ENCODE measurements at regions of chr6 and their contacts with region 1.

Region 1: DNA sequence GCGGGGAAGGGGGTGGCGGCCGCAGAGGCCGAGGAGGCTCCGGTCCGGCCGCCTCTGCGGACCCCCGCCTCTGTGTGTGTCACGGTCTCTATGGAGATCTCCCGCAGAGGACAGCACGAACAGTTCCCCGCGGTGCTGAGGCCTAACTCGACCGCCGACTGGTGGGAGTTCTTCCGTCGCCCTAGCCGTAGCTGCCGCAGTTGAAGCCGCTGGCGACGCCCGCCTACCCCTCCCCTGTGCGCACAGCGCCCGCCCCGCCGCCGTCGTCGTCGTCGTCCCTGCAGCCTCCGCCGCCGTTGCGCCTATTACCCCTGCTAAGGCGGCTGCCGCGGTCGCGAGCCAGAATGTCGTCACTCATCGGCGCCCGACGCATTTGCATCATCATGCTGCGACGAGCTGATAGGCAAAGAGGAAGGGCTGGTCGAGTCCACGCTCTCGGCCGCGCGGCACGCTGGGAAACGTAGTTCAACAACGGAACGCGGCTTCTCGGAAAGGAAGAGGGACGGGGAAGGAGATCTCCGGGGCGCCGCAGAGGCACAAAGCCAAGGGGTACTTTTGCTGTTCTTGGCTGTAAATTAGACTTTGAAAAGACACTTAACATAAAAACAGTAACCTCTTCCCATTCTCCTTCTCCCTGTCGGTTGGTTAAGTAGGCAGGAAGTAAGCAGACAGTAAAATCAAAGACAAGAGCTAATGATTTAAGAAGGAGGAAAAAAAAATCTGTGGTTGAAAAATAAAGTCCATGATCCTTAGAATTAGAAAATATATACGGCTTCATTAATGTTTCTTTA is at the start of gene NUP153:
- DNase-seq: peak; percentile 98 to 100 (median 100)
- ATAC-seq: peak; percentile 79
- H3K4me3 ChIP-seq: peak within 1 kb of the TSS; percentile 82
- H3K4me3 Mint-ChIP-seq: peak within 1 kb of the TSS; percentile 95
- H3K27ac ChIP-seq: peak within 1 kb of the TSS; percentile 98 to 99
- H3K27ac Mint-ChIP-seq: peak within 1 kb of the TSS; percentile 93
- H3K4me1 ChIP-seq: peaks cover 41% of the 10 kb centered on the region
- H3K4me1 Mint-ChIP-seq: peaks cover 48% of the 10 kb centered on the region
- H3K27me3 ChIP-seq: no peaks in the 10 kb centered on the region
- H3K27me3 Mint-ChIP-seq: no peaks in the 10 kb centered on the region
- CTCF ChIP-seq: no peak
- total RNA-seq, gene NUP153: 58.3 to 61.0 TPM

Region 2: DNA sequence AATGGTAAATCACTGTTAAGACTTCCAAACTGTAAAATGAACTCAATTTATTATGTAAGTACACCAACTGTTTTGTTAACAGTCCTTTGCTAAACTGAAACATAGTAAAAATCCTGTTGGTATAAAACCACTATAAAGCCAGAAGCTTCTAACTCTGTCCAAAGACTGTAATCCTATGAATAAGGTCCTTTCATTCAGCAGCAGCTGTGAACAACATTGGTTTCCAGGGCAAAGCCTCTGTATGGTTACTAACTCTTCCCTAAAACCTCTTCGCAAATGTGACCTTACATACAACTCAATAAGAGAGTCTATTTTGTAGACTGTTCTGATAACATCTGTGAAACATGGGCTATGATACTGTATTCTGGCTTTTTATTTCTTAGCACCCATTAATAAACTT is 40.1 kb before region 1 on chr6:
- CTCF ChIA-PET with region 1: no interaction called
- POLR2A ChIA-PET with region 1: interaction called, 4 read pairs
- intact Hi-C with region 1: loop called (anchors 5 kb)
- DNase-seq: no peak
- ATAC-seq: no peak
- H3K4me3 ChIP-seq: no peak overlapping the region
- H3K4me3 Mint-ChIP-seq: no peak overlapping the region
- H3K27ac ChIP-seq: no peak overlapping the region
- H3K27ac Mint-ChIP-seq: no peak overlapping the region
- H3K4me1 ChIP-seq: peaks cover 4% of the 10 kb centered on the region
- H3K4me1 Mint-ChIP-seq: peaks cover 36% of the 10 kb centered on the region
- H3K27me3 ChIP-seq: no peaks in the 10 kb centered on the region
- H3K27me3 Mint-ChIP-seq: no peaks in the 10 kb centered on the region
- CTCF ChIP-seq: no peak

Region 3: DNA sequence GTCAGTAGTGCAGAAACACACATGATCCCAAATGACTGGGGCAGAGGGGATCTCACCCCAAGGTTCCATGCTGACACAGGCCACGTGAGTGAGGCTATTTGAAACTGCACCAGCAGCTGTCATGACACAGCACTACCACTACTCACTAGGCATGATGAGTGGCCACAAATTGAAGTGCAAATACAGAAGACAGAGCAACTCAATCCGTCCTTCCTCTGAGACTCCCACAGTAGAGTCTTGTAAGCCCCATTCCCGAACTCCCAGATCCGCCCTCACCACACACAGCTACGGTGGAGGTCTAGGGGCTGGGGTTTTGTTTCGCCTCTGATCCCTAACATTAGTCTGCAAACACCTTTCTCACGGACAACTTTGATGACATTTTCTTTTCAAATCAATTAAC is 113.3 kb after region 1 on chr6:
- CTCF ChIA-PET with region 1: no interaction called
- POLR2A ChIA-PET with region 1: no interaction called
- intact Hi-C with region 1: no loop called
- DNase-seq: no peak
- ATAC-seq: no peak
- H3K4me3 ChIP-seq: no peak overlapping the region
- H3K4me3 Mint-ChIP-seq: no peak overlapping the region
- H3K27ac ChIP-seq: no peak overlapping the region
- H3K27ac Mint-ChIP-seq: no peak overlapping the region
- H3K4me1 ChIP-seq: no peaks in the 10 kb centered on the region
- H3K4me1 Mint-ChIP-seq: no peaks in the 10 kb centered on the region
- H3K27me3 ChIP-seq: no peaks in the 10 kb centered on the region
- H3K27me3 Mint-ChIP-seq: peaks cover 7% of the 10 kb centered on the region
- CTCF ChIP-seq: no peak